Activated T-helper 2 cell treated with anti-CD3 and anti-CD28 coated beads, Interferon-gamma antibody, Interleukin-2, Interleukin-4, amounts not matched to agents 10 μg/mL and 5 μg/mL and 100 μg/mL, durations not matched to agents 14 hours and 24 hours and 36 hours (primary cell): ENCODE measurements at regions of chr2 and their contacts with region 1.

Region 1: DNA sequence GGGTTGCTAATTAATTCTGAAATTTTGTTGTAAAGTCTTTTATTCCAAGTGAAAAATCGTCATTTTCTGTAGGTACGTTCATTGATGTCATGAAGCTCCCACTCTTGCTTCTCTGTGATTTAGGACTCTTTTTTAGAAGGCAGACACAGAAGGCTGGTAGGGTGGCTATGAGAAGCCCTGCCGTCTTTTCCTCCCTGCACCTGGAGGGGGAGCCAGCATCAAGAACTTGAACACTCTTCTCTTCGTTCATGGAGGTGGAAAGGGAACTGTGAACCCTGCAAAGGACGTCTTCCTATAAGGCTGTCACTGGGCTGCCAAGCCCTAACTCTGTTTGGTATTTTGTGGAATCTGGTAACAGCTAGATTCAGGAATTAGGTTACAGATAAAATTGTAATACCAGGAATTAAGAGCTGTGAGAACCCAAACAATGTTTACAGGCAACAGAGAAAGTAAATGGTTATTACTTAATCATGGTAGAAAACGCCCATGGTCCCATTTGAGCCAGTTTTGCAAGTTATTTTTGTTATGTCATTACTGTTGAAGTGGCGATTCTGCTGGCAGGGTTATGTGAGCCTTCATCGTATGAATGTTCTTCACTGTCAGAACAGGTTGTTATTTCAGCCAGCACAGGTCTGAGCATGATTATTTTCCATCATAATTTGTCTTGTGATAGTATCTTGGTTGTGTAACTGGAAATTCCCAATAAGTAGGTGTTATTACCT is 112.2 kb downstream of the OSBPL6 start:
- DNase-seq: peak; percentile 24
- H3K4me3 Mint-ChIP-seq: no peak overlapping the region
- H3K27ac Mint-ChIP-seq: no peak overlapping the region
- H3K4me1 Mint-ChIP-seq: no peaks in the 10 kb centered on the region
- H3K27me3 Mint-ChIP-seq: peaks cover 13% of the 10 kb centered on the region

Region 2: DNA sequence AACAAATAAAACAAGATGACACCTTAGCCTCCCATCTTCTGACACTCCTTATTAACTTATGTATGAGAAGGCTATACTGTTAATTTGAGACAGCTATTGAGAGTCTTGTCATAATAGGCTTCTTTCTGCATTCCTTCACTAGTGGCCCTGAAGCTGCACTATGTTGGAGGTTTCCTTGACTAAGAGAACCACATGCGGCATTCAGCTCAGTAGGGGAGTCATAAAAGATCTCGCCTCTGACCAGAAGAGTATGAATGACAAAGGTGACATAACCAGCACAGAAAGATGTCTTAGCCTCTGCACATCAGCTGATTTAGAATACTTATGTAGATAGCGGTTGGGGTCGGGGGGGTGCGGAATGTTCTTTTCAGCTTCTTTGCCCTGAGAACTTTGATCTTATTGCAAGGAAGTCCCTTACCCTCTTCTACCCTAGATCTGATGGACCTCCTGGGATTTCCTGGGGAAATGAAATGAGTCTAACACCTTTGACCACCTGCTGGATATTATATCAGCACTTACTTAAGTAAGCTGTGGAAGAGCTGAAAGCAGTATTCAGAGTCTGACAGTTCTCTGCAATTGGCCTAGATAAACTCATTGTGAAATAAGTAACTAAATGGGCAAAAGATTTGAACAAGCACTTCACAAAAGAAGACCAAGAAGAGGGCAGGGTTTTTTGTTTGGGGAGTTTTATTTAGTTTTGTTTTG is 170.0 kb before region 1 on chr2:
- intact Hi-C with region 1: no loop called
- DNase-seq: no peak
- H3K4me3 Mint-ChIP-seq: no peak overlapping the region
- H3K27ac Mint-ChIP-seq: no peak overlapping the region
- H3K4me1 Mint-ChIP-seq: no peaks in the 10 kb centered on the region
- H3K27me3 Mint-ChIP-seq: no peaks in the 10 kb centered on the region

Region 3: DNA sequence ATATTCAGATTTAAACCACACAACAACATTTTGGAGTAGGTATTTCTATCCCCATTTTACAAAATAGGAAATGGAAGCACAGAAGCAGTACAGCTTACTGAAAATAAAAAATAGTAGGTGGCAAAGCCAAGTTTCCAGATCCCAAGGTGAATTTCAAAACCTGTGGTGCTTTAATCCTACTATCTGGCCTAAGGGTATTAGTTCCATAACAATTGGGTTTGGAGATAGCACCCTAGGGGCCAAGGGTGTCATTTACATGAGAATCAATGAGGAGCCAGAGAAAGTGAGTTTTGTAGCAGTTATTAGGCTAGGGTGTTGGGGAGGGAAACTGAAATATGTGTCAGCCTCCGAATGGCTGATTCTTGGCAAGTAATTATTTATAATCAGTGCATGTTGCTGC is 87.3 kb before region 1 on chr2:
- intact Hi-C with region 1: no loop called
- DNase-seq: no peak
- H3K4me3 Mint-ChIP-seq: no peak overlapping the region
- H3K27ac Mint-ChIP-seq: no peak overlapping the region
- H3K4me1 Mint-ChIP-seq: no peaks in the 10 kb centered on the region
- H3K27me3 Mint-ChIP-seq: peaks cover 6% of the 10 kb centered on the region

Region 4: GRCh38 chr2:178295116-178295515 is 11.4 kb before region 1 on chr2:
- intact Hi-C with region 1: no loop called
- DNase-seq: no peak
- H3K4me3 Mint-ChIP-seq: no peak overlapping the region
- H3K27ac Mint-ChIP-seq: no peak overlapping the region
- H3K4me1 Mint-ChIP-seq: peaks cover 2% of the 10 kb centered on the region
- H3K27me3 Mint-ChIP-seq: peaks cover 10% of the 10 kb centered on the region

Region 5: DNA sequence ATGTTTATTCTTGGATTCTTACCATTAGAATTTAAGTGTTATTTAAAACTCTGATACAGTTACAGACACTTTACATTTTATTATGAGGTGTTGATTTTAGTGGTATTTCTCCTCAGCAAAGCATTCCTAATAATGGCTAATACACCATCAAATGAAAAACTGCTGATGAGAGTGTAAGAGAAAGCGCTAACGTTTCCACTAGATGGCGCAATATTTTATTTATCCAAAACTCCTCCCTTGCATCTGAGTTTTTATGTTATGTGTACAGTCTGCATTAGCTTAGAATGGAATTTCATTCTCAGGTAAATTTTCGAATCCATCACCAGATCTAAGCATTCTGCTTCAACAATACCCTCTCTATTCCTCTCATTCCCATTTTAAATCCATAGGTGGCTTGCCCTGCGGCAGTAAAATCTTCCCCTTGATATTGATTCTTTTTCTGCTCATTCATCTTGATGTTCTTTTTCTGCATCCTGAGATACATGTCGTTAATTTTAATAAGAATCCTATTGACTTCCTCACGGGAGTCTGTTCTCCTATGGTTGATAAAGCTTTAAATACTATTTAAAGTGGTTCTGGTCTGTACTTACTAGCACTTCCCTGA is 90.6 kb after region 1 on chr2:
- intact Hi-C with region 1: loop called (anchors 5 kb)
- DNase-seq: no peak
- H3K4me3 Mint-ChIP-seq: no peak overlapping the region
- H3K27ac Mint-ChIP-seq: no peak overlapping the region
- H3K4me1 Mint-ChIP-seq: peaks cover 12% of the 10 kb centered on the region
- H3K27me3 Mint-ChIP-seq: peaks cover 21% of the 10 kb centered on the region

Region 6: DNA sequence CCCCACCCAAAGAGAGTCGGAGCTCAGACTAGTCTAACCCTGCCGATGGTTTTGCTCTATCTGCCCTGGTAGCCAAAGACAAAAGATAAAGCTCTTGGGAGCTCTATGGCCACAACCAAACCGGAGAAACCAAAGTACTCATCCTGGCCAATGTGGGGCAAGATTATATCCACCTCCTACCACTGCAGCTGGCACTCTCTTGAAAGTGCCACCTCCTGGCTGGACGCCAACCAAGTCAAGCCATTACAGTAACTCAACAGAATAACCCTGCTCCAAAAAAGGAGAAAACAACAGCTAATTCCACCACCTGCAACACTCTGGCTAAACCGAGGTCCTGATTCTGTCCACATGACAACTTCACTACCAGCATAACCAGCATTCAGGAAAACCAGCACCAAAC is 900.5 kb after region 1 on chr2:
- intact Hi-C with region 1: no loop called
- DNase-seq: no peak
- H3K4me3 Mint-ChIP-seq: no peak overlapping the region
- H3K27ac Mint-ChIP-seq: no peak overlapping the region
- H3K4me1 Mint-ChIP-seq: peaks cover 5% of the 10 kb centered on the region
- H3K27me3 Mint-ChIP-seq: no peaks in the 10 kb centered on the region